MCF 10A (cell line): ENCODE measurements at regions of chr1 and their contacts with region 1.

Region 1: DNA sequence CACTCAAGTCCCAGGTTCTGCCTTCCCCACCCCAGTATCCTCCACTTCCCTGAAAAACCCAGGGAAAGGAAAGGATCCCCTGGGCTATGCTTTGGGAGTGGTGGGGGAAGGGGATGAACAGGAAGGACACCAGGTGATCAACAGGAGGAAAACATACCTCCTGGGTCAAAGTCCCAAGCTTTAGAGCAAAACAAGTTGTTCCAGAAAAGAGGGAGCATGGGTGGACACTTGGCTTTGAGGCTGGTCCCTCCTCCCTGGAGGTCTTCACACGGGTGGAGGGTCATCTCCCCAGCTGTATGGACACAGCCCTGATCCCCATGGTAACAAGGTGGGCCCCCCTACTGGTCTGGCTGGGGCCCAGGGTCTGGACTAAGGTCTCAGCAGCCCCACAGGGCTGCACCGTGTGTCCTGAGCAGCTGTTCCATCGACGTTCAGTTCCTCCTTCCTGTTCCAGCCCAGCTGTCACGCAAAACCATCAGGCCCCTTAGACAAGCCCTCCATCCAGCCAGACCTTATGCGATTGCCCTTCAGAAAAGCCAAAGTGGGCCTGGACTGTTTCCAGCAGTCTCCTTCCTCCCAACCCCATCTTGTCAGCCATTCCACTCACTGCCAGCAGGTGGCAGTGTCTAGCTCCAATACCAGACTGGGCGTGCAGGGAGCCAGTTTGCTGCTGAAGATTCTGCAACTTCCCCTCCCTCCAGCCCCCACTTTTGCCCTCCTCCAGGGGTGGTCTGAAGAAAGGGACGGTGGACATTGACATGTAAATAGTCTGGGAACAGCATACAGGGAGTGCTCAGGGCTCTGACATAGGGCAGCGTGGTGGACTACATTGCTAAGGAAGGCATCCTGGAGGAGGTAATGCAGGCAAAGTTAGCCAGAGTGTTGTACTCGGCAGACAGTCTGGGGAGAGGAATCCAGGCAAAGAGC is 2.9 kb upstream of the PDZK1IP1 start:
- DNase-seq: peak; percentile 81
- H3K4me3 Mint-ChIP-seq: peak overlapping the region; percentile 58
- H3K27ac Mint-ChIP-seq: peak overlapping the region; percentile 62
- H3K4me1 Mint-ChIP-seq: peaks cover 33% of the 10 kb centered on the region
- H3K27me3 Mint-ChIP-seq: no peaks in the 10 kb centered on the region
- CTCF ChIP-seq: peak; percentile 92

Region 2: GRCh38 chr1:47225430-47226100 is 32.8 kb after region 1 on chr1:
- CTCF ChIA-PET with region 1: interaction called, 11 read pairs
- POLR2A ChIA-PET with region 1: no interaction called
- intact Hi-C with region 1: no loop called
- DNase-seq: no peak
- H3K4me3 Mint-ChIP-seq: no peak overlapping the region
- H3K27ac Mint-ChIP-seq: no peak overlapping the region
- H3K4me1 Mint-ChIP-seq: no peaks in the 10 kb centered on the region
- H3K27me3 Mint-ChIP-seq: peaks cover 13% of the 10 kb centered on the region
- CTCF ChIP-seq: no peak

Region 3: GRCh38 chr1:47262787-47263413 is 70.2 kb after region 1 on chr1:
- CTCF ChIA-PET with region 1: interaction called, 212 read pairs
- POLR2A ChIA-PET with region 1: interaction called, 23 read pairs
- intact Hi-C with region 1: loop called (anchors 1 kb)
- DNase-seq: peak; percentile 67
- H3K4me3 Mint-ChIP-seq: no peak overlapping the region
- H3K27ac Mint-ChIP-seq: no peak overlapping the region
- H3K4me1 Mint-ChIP-seq: peaks cover 16% of the 10 kb centered on the region
- H3K27me3 Mint-ChIP-seq: no peaks in the 10 kb centered on the region
- CTCF ChIP-seq: peak; percentile 71

Region 4: GRCh38 chr1:47325530-47325929 is 132.8 kb after region 1 on chr1:
- CTCF ChIA-PET with region 1: interaction called, 36 read pairs
- POLR2A ChIA-PET with region 1: no interaction called
- intact Hi-C with region 1: loop called (anchors 5 kb)
- DNase-seq: peak; percentile 78
- H3K4me3 Mint-ChIP-seq: no peak overlapping the region
- H3K27ac Mint-ChIP-seq: no peak overlapping the region
- H3K4me1 Mint-ChIP-seq: no peaks in the 10 kb centered on the region
- H3K27me3 Mint-ChIP-seq: no peaks in the 10 kb centered on the region
- CTCF ChIP-seq: no peak

Region 5: DNA sequence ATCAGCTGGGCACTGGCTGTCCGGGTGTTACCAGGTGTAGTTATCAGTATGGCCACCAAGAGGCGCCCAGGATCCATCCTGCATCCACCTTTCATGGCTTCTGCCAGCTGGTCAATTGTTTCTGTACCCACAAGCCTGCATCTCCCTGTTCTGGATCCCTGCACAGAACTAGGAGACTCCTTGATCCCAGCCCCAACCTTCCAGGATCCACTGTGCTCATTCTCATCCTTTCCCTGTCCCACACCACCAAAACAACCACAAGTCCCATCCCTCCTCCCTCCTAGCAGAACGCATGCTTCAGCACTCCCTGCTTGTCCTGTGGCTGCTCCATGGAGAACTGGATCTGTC is 196.1 kb after region 1 on chr1:
- CTCF ChIA-PET with region 1: interaction called, 34 read pairs
- POLR2A ChIA-PET with region 1: interaction called, 3 read pairs
- intact Hi-C with region 1: no loop called
- DNase-seq: peak; percentile 81
- H3K4me3 Mint-ChIP-seq: no peak overlapping the region
- H3K27ac Mint-ChIP-seq: no peak overlapping the region
- H3K4me1 Mint-ChIP-seq: no peaks in the 10 kb centered on the region
- H3K27me3 Mint-ChIP-seq: no peaks in the 10 kb centered on the region
- CTCF ChIP-seq: peak; percentile 94

Region 6: DNA sequence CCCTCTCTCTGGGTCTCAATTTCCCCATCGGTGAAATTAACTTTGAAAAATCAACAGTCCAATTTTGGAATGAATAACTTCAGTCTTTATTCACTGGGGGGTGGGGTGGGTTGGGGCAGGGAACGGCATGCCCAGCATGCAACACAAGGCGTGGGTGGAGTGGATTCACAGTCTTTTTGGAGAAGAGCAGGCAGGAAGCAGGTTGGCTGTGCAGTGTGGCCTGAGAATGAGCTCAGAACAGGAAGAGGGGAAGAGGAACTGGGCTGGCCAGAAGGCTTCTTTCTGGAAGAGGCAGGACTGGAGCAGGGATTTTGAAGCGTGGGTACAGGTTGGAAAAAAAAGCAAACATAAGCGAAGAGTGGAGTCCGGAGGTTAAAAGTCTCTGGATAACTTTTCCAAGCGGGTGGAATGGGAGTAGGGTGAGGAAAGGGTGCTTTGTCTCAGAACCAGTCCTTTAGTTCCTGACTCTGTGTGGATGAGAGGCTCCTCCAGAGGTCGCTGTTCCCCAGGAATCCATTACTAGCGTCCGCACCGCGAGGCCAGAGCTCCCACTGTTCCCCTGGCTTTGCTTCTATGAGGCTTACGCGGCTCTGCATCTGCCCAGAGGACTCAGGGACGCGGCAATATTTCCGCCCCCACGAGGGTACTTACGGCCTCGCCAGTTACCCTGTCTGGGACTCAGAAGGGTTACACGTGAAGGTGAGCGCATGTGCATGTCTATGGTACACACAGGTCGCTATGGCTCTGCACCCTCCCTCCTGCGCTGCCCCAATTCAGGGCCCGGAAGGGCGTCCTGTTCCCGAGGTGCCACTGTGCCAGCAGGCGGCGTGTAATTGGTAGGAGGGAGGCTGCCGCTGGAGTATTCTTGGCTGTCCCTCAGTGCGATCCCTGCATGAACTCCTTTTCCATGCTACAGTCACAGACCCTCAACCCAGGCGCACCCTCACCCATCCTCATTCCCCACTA is 239.6 kb after region 1 on chr1:
- CTCF ChIA-PET with region 1: interaction called, 12 read pairs
- POLR2A ChIA-PET with region 1: interaction called, 3 read pairs
- intact Hi-C with region 1: no loop called
- DNase-seq: peak; percentile 89
- H3K4me3 Mint-ChIP-seq: peak overlapping the region; percentile 48
- H3K27ac Mint-ChIP-seq: peak overlapping the region; percentile 14
- H3K4me1 Mint-ChIP-seq: peaks cover 37% of the 10 kb centered on the region
- H3K27me3 Mint-ChIP-seq: no peaks in the 10 kb centered on the region
- CTCF ChIP-seq: peak; percentile 87